ENCODE measurements at regions of chr3 and their contacts with region 1.

Region 1: DNA sequence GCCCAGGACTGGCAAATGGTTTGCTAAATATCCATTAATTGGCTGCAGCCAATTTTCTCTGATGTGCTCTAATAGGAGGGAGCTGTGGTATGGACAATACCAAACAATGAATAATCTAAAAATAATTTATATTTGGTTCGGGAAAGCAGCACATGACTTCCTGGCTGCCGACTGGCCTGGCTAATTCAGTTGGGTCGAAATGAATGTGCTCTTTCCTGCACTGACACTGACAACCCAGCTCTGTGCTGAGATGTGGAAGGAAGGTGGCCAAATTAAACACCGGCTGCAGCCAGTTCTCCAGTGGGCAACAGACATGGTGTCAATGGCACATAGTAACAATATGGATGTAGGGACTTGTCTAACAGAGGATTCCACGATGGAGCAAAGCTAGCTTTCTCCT is 21.1 kb upstream of the COLQ start:
- H3K4me3 ChIP-seq: no peak overlapping the region
- H3K27ac ChIP-seq: no peak overlapping the region
- H3K4me1 ChIP-seq: no peaks in the 10 kb centered on the region
- CTCF ChIP-seq: no peak

Region 2: DNA sequence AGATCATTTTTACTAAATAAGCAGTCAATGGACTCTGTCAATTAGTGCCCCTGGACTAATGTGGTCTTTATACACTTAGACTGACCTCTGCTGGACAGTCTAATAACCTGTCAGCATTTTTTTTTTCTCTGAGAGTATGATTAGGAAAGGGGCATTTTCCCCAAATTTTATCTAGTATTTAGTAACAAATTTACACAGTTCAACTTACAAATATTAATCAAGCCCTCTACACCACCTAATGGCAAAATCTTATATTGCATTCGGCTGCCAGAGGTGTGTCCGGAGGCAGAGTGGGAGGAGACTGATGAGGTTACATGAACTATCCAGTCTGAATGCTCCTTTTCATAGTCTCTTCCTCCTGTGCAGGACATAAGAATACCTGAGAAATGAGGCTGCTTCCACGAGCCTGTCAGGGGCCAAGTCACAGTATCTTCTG is 14.9 kb after region 1 on chr3:
- CTCF ChIA-PET with region 1: interaction called, 13 read pairs
- POLR2A ChIA-PET with region 1: no interaction called
- H3K4me3 ChIP-seq: no peak overlapping the region
- H3K27ac ChIP-seq: no peak overlapping the region
- H3K4me1 ChIP-seq: no peaks in the 10 kb centered on the region
- CTCF ChIP-seq: peak; percentile 45

Region 3: DNA sequence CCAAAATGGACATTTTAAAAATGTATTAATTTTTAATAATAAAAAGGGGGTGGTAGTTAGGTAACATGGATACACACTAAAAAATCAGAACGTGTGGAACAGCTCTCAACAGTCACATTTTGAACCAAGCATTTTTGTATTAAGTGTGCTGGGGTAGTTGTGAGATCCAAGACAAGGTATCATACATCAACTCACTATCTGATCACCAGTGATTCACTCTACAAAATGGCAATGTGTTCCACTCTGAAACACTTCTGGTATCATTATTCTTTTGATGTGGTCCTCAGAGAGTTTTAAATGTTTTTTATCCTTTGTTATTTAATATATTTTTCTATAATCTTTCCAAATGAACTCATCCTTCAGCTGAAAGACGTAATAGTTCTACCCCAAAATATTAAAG is 53.3 kb after region 1 on chr3:
- CTCF ChIA-PET with region 1: no interaction called
- POLR2A ChIA-PET with region 1: no interaction called
- H3K4me3 ChIP-seq: no peak overlapping the region
- H3K27ac ChIP-seq: no peak overlapping the region
- H3K4me1 ChIP-seq: no peaks in the 10 kb centered on the region
- CTCF ChIP-seq: no peak

Measured in HEK293 (cell line).